Activated CD8-positive, alpha-beta T cell treated with anti-CD3 and anti-CD28 coated beads for 36 hours (primary cell): ENCODE measurements at regions of chr12 and their contacts with region 1.

Region 1: GRCh38 chr12:57904848-57905811 is 36.2 kb upstream of the ATP23 start:
- DNase-seq: peak; percentile 91
- ATAC-seq: peak; percentile 100
- H3K4me3 Mint-ChIP-seq: no peak overlapping the region
- H3K27ac Mint-ChIP-seq: peak overlapping the region; percentile 14
- H3K4me1 Mint-ChIP-seq: peaks cover 5% of the 10 kb centered on the region
- H3K27me3 Mint-ChIP-seq: peaks cover 2% of the 10 kb centered on the region
- CTCF ChIP-seq: peak; percentile 100

Region 2: DNA sequence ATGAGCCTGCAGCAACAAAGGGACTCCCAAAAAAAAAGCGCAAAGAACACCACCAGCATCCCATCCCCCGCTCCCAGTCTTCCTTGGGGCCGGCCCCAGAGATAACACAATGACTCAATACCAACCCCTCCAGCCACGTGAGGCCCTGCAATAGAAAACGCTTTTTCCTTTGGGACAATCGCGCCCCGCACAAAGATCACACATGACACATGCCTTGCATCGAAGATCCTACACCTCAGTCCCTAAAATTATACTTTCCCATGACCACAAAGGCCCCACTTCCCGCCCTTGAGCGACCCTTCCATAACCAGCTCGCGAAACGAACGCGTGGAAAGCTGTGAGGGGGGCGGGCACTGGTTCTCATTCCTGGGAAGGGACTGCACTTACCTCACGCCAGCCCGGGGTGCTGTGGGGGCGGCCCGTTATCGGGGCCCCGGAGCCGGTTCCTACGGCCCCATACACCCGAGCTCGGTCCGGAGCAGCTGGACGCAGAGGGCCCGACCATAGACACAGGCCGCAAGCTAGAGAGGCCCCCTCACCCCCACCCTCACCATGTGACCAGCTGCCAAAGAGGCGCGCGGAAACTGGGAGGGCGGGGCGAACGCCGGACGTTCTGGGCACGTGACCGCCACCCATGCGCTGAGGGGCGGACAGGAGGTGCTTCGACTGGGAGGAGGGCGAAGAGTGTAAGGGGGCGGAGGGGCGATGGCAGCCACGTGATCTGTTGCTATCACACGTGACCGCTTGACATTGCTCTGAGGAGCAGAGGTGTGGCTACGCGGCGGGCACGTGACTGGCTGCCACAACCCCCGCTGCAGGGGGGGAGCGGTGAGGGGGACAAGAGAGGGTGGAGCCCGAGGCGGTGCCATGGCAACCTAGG is 153.1 kb before region 1 on chr12 and contains the start of gene CDK4:
- CTCF ChIA-PET with region 1: interaction called, 12 read pairs
- POLR2A ChIA-PET with region 1: interaction called, 3 read pairs
- intact Hi-C with region 1: no loop called
- DNase-seq: peak; percentile 100
- ATAC-seq: peak; percentile 82
- H3K4me3 Mint-ChIP-seq: peak within 1 kb of the TSS; percentile 86
- H3K27ac Mint-ChIP-seq: peak within 1 kb of the TSS; percentile 94
- H3K4me1 Mint-ChIP-seq: peaks cover 53% of the 10 kb centered on the region
- H3K27me3 Mint-ChIP-seq: no peaks in the 10 kb centered on the region
- CTCF ChIP-seq: no peak
- total RNA-seq, gene CDK4: 218 to 221 TPM

Region 3: GRCh38 chr12:57782608-57783465 is 122.3 kb before region 1 on chr12 and contains the start of gene TSFM:
- CTCF ChIA-PET with region 1: interaction called, 12 read pairs
- POLR2A ChIA-PET with region 1: no interaction called
- intact Hi-C with region 1: loop called (anchors 5 kb)
- DNase-seq: peak; percentile 99
- ATAC-seq: peak; percentile 95
- H3K4me3 Mint-ChIP-seq: peak within 1 kb of the TSS; percentile 99
- H3K27ac Mint-ChIP-seq: peak within 1 kb of the TSS; percentile 96
- H3K4me1 Mint-ChIP-seq: peaks cover 28% of the 10 kb centered on the region
- H3K27me3 Mint-ChIP-seq: no peaks in the 10 kb centered on the region
- CTCF ChIP-seq: peak; percentile 97
- total RNA-seq, gene TSFM: 46.3 to 47.3 TPM

Region 4: GRCh38 chr12:57809425-57809824 is 95.7 kb before region 1 on chr12:
- CTCF ChIA-PET with region 1: interaction called, 124 read pairs
- POLR2A ChIA-PET with region 1: no interaction called
- intact Hi-C with region 1: no loop called
- DNase-seq: no peak
- ATAC-seq: no peak
- H3K4me3 Mint-ChIP-seq: no peak overlapping the region
- H3K27ac Mint-ChIP-seq: no peak overlapping the region
- H3K4me1 Mint-ChIP-seq: no peaks in the 10 kb centered on the region
- H3K27me3 Mint-ChIP-seq: no peaks in the 10 kb centered on the region
- CTCF ChIP-seq: no peak

Region 5: DNA sequence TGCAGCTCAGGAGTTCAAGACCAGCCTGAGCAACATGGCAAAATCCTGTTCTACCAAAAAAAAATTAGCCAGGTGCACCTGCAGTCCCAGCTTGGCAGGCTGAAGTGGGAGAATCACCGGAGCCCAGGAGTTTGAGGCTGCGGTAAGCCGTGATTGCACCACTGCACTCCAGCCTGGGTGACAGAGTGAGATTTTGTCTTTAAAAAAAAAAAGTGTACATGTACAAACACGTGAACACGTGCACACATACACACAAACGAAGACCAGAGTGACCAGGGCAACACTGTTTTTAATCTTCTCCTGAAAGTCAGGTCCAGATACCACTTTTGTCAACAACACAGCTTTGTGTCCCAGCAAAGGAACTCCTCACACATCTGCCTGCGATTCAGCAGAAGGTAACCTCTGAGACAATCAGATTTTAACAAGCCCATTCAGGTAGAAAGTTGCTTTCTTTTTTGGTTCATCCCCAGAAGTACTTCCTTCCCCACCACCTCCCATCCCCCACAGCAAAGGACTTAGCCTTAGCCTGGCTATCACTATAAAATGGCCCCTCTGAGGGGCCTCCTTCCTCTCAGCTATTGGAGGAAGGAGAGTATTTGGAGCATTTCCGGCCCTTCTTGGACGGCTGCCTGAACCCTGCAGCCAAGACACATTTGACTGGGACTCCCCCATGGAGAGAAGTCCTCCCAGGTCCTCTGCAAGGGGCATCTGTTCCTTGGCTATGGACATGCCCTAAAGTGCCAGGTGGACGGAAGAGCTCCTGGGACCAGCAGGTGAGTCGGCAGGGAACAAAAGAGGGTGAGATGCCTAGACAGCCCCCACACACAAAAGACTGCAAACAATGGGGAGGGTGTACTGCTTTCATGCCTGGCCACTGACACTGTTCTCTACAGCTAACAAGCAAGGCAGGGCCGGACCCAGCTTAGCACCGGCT is 68.4 kb before region 1 on chr12:
- CTCF ChIA-PET with region 1: interaction called, 96 read pairs
- POLR2A ChIA-PET with region 1: interaction called, 12 read pairs
- intact Hi-C with region 1: loop called (anchors 1 kb)
- DNase-seq: peak; percentile 79
- ATAC-seq: peak; percentile 70
- H3K4me3 Mint-ChIP-seq: peak overlapping the region; percentile 62
- H3K27ac Mint-ChIP-seq: peak overlapping the region; percentile 91
- H3K4me1 Mint-ChIP-seq: peaks cover 90% of the 10 kb centered on the region
- H3K27me3 Mint-ChIP-seq: no peaks in the 10 kb centered on the region
- CTCF ChIP-seq: no peak

Region 6: GRCh38 chr12:57865090-57865751 is 39.9 kb before region 1 on chr12:
- CTCF ChIA-PET with region 1: interaction called, 16 read pairs
- POLR2A ChIA-PET with region 1: no interaction called
- intact Hi-C with region 1: no loop called
- DNase-seq: peak; percentile 87
- ATAC-seq: peak; percentile 96
- H3K4me3 Mint-ChIP-seq: peak overlapping the region; percentile 70
- H3K27ac Mint-ChIP-seq: peak overlapping the region; percentile 45
- H3K4me1 Mint-ChIP-seq: peaks cover 6% of the 10 kb centered on the region
- H3K27me3 Mint-ChIP-seq: peaks cover 6% of the 10 kb centered on the region
- CTCF ChIP-seq: no peak